Dorsolateral prefrontal cortex (tissue), 120 donors: ENCODE measurements at regions of chr1 and their contacts with region 1.

Region 1: GRCh38 chr1:21659099-21659923 is 9.8 kb downstream of the RAP1GAP start:
- DNase-seq: peak; percentile 74 to 88 (median 81)
- H3K4me3 ChIP-seq: peak overlapping the region in 58 of 59 donors; percentile 3 to 62 (median 44)
- H3K27ac ChIP-seq: peak overlapping the region in 46 of 59 donors; percentile 1 to 82 (median 54)
- H3K27me3 ChIP-seq: no peaks in the 10 kb centered on the region
- CTCF ChIP-seq: peak; percentile 74 to 99 (median 94)

Region 2: DNA sequence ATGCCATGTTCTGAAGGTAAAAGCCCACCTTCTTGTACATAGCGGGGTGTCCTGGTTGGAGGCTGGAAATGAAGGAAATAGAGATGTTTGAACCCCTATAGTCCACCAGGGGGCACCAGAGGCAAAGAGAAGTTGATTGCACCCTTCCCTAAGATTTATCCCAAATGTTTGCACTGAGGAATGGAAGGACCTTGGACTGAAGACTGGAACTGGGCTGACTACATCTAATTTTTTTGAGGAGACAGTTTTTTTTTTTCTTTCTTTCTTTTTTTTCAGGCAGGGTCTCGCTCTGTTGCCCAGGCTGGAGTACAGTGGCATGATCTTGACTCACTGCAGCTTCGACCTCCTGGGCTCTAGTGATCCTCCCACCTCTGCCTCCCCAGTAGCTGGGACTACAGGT is 427.3 kb before region 1 on chr1:
- intact Hi-C with region 1: loop called (anchors 5 to 10 kb)
- DNase-seq: peak in 2 of 10 donors; percentile 56 to 70
- H3K4me3 ChIP-seq: no peak overlapping the region
- H3K27ac ChIP-seq: no peak overlapping the region
- H3K27me3 ChIP-seq: no peaks in the 10 kb centered on the region
- CTCF ChIP-seq: peak; percentile 73 to 95 (median 82)

Region 3: DNA sequence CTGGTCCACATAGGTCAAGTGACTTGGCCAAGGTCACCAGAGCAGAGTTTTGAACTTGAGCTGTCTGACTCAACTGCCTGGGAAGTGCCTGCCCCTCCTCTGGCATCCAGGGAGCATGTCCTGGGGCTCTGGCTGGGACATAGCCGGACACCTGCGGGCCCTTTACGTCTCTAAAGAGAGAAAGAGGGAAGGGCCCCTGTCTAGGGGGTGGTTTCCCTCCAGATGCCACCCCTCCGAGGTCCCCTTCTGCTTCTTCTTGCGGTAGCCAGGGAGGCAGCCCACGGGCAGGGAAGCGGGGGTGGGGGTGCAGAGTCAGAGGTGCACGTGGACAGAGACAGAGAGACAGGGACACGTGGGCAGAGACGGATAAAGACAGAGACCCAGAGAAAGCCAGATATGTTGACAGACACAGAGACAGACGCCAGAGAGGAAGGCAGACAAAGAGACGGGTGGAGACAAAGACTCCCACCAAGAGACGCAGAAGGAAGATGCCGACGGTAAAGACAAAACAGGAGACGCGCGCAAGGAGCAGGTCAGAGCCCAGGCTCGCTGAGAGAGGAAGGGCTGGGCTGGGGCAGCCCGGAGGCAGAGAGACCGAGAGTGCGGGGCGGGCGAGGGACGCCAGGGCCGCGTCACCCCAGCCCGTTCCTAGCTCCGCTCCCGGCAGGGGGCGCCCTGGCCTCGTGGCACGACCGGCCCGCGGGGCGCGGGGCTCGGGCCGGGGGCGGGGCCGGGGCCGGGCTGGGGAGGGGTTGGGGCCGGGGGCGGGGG is 150.5 kb before region 1 on chr1:
- intact Hi-C with region 1: loop called (anchors 2 kb)
- DNase-seq: peak in 5 of 10 donors; percentile 22 to 69 (median 34)
- H3K4me3 ChIP-seq: peak overlapping the region in 48 of 59 donors; percentile 18 to 62 (median 45)
- H3K27ac ChIP-seq: peak overlapping the region in 5 of 59 donors; percentile 6 to 32 (median 23)
- H3K27me3 ChIP-seq: peaks cover 0 to 20% (median 7%) of the 10 kb centered on the region in 45 donors
- CTCF ChIP-seq: peak in 55 of 56 donors; percentile 24 to 77 (median 58)

Region 4: DNA sequence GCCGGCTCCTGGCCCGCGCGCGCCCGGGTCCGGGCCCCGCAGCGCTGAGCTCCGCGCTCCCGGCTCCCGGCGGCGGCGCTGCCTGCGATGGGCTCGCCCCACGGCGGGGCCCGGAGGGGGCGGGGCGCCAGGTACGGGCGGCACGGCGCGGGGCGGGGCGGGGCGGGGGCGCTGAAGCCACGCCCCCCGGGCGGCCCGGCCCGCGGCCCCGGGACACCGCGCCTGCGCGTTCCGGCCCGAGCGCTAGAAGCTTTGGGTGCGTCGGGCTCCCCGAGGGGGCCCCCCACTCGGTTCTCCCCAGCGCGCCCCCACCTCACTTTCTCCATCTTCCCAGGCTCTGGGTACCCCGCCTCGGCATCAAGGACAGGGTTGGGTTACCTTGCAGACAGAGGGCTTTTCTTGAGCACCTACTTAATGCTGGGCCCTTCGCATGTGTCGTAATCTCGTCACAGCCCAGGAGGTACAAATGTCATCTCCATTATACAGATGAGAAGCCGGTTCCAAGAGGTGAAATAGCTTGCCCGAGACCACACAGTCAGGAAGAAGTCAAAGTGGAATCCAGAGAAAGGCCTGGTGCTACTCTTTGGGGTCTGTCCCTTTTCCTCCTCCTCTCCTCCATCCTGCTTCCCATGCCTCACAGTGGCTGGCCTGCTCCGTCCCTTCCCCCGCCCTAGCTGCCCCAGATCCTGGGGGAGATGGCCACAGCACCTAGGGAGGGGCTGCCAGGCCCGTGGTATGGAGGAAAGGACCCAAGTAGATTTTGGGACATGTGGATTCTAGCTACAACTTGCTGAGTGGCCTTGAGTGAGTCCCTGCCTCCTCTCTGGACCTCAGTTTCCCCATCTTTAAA is 36.6 kb before region 1 on chr1:
- intact Hi-C with region 1: loop called in 1 of 2 experiments (anchors 5 kb)
- DNase-seq: no peak
- H3K4me3 ChIP-seq: peak overlapping the region in 19 of 59 donors; percentile 12 to 52 (median 33)
- H3K27ac ChIP-seq: peak overlapping the region in 26 of 59 donors; percentile 1 to 80 (median 46)
- H3K27me3 ChIP-seq: peaks cover 0 to 3% (median 0%) of the 10 kb centered on the region in 45 donors
- CTCF ChIP-seq: no peak

Region 5: DNA sequence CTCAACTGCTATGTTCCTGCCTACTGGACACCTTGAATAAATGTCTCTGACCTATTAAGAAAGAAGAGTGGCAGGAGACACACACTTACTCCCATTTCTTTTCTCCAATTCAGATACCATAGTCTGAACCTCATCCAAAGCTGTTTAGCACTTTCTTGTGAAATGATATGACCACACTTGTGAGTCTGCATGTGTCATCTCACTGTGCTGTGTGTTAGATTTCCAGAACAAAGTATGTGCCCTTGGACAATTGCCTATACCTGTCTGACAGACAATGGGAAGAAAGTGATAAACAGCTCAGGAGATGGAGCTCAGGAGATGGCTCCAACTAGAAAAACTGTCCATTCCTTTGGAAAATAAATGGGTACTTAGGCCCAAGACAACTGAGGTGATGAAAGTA is 75.2 kb after region 1 on chr1:
- intact Hi-C with region 1: no loop called
- DNase-seq: no peak
- H3K4me3 ChIP-seq: no peak overlapping the region
- H3K27ac ChIP-seq: no peak overlapping the region
- H3K27me3 ChIP-seq: no peaks in the 10 kb centered on the region
- CTCF ChIP-seq: no peak

Region 6: DNA sequence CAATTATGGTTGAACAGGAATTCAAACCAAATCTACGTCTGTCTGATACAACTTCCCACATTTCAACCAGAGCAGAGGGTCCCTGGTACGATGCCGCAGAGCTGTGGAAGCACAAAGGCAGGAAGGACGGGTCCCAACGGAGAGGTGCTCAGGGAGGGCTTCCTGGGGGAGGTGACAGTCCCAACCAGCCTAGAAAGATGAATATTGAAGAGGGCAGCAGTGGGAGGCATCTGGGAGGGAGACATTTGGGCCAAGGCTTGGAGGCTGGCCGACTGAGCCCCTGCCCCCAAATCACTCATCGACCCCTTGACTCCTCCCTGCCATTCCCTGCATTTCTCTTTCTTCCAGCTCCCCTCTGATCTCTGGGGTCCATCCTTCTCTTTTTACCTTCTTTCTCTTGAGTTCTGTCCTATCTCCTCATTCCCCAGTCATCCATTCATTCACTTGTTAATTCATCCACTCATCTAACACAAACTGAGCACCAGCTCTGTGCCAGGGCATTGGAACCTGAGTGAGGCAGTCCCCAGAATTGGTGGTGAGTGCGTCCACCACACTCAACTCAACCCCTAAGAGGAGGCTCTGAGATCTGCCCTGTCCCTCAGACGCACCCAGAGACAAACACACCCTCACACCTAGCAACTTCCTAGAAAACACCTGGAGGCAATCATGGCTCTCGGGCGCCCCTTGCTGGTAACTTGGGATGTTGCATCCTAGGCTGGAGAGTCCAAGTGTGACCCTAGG is 304.3 kb after region 1 on chr1:
- intact Hi-C with region 1: loop called (anchors 5 to 10 kb)
- DNase-seq: peak; percentile 39 to 87 (median 74)
- H3K4me3 ChIP-seq: no peak overlapping the region
- H3K27ac ChIP-seq: no peak overlapping the region
- H3K27me3 ChIP-seq: no peaks in the 10 kb centered on the region
- CTCF ChIP-seq: peak; percentile 74 to 98 (median 93)